ENCODE measurements at regions of chr1 and their contacts with region 1.

Region 1: DNA sequence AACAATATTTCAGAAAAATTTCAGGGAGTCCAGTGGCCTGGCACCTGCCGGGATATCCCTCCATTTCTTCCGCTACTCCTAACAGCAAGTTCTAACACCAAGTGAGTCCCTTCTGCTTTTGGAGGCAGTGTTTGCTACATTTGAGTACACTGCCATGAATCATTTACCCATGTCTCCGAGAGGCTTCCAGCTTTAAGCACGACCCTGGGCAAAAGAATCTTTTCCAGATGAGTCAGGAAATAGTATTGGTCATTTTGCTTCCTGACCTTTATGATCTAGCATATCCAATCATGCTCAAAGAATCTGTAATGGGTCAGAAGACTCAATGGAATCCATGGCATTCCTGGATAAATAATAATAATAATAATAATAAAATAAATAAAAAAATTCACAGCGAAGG is 60.7 kb upstream of the FMN2 start:
- DNase-seq: no peak
- ATAC-seq: no peak
- H3K4me3 ChIP-seq: no peak overlapping the region
- H3K27ac ChIP-seq: no peak overlapping the region
- H3K4me1 ChIP-seq: no peaks in the 10 kb centered on the region
- H3K27me3 ChIP-seq: no peaks in the 10 kb centered on the region
- CTCF ChIP-seq: no peak

Region 2: GRCh38 chr1:240149484-240150094 is 118.6 kb after region 1 on chr1:
- intact Hi-C with region 1: loop called in 1 of 2 experiments (anchors 10 kb)
- DNase-seq: peak in 2 of 4 donors; percentile 26 to 30
- ATAC-seq: peak; percentile 54
- H3K4me3 ChIP-seq: no peak overlapping the region
- H3K27ac ChIP-seq: no peak overlapping the region
- H3K4me1 ChIP-seq: no peaks in the 10 kb centered on the region
- H3K27me3 ChIP-seq: no peaks in the 10 kb centered on the region
- CTCF ChIP-seq: peak; percentile 44 to 51

Measured in left lung (tissue), 14 donors.